ENCODE measurements at regions of chr17 and their contacts with region 1.

Region 1: DNA sequence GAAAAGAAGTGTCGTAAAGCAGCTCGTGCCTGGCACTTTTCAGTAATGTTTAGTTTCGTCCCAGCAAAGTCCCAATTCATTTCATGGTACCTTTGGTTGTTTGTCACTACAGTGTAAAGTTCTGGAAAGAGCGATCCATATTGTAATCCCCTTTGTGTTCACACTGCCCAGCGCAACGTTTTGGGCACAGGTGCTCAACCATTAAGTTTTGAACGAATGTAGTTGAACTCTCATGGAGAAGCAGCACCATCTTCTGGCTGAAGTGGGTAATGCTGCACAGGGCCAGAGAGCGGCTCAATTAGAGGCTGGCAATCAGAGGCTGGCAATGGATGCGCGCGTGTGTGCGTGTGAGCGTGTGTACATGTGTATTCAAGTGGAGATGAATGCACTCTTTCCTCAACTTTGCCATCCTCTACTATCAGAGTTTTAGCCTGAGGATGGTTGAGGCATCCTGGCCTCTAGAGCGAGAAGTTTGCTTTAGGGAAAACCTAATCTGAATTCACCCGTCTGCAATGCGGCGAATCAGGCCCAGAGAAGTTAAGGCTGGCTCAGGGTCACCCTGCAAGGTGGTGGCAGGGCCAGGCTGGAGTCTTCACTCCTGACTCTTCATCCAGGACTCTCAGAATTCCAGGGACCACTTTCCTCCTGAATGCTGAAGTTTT is 29.9 kb downstream of the DYNLL2 start:
- DNase-seq: peak; percentile 60 to 79 (median 70)
- ATAC-seq: peak; percentile 98
- H3K4me3 ChIP-seq: no peak overlapping the region
- H3K27ac ChIP-seq: no peak overlapping the region
- H3K4me1 ChIP-seq: no peaks in the 10 kb centered on the region
- H3K27me3 ChIP-seq: peaks cover 0 to 8% of the 10 kb centered on the region in 2 donors
- CTCF ChIP-seq: peak; percentile 90 to 95

Region 2: DNA sequence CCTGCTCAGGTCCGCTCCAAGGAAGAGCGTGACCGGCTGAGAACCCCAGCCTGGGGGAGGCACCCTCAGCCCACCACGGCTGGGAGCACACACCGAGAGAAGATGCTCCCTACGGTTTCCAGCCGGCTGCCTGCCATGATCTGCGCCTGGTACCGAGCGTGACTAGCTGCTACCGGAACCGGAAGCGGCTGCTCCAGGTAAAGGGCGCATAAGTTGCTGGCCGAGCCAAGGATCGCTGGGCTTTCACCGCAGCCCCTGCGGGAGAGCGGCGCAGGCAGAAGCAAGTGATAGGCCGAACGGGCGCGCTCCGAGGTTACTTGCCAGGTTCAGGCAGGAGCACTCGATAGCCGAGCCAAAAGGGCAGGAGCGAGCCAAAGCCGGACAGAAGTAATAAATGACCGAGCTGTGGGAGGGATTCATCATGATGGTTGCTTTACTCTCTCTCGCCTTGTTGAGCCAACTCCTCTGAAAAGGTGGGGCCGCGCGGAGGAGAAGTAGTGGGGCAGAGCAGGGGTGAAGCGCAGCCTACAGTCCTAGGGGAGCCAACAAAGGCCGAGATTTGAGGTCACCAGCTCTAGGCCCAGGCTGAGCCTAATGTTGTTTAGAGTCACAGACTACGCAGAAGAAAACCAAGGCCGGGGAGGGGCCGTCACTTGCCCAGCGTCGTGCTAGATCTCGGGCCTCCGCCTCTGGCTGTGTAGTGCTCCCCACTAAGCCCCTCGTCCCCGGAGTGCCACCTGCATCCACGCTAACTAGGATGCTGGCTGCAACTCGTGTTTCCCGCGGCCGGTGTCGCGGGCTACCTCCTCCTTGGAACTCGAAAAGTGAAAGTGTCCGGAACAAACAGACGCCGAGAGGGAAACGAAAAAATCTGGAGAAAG is 263.0 kb before region 1 on chr17 and contains the start of gene MRPS23:
- intact Hi-C with region 1: loop called in 1 of 2 experiments (anchors 10 kb)
- DNase-seq: peak; percentile 93 to 99 (median 98)
- ATAC-seq: peak; percentile 96
- H3K4me3 ChIP-seq: peak within 1 kb of the TSS; percentile 79 to 89
- H3K27ac ChIP-seq: peak within 1 kb of the TSS; percentile 85 to 91
- H3K4me1 ChIP-seq: peaks cover 21 to 43% of the 10 kb centered on the region in 2 donors
- H3K27me3 ChIP-seq: no peaks in the 10 kb centered on the region
- CTCF ChIP-seq: peak in 1 of 2 donors; percentile 33
- polyA plus RNA-seq, gene MRPS23: 39.7 to 46.1 (median 44.2) TPM

Region 3: GRCh38 chr17:58028578-58028977 is 84.5 kb before region 1 on chr17:
- intact Hi-C with region 1: no loop called
- DNase-seq: no peak
- ATAC-seq: no peak
- H3K4me3 ChIP-seq: no peak overlapping the region
- H3K27ac ChIP-seq: no peak overlapping the region
- H3K4me1 ChIP-seq: no peaks in the 10 kb centered on the region
- H3K27me3 ChIP-seq: no peaks in the 10 kb centered on the region
- CTCF ChIP-seq: no peak

Region 4: GRCh38 chr17:58382108-58382871 is 269.2 kb after region 1 on chr17:
- intact Hi-C with region 1: no loop called
- DNase-seq: no peak
- ATAC-seq: no peak
- H3K4me3 ChIP-seq: no peak overlapping the region
- H3K27ac ChIP-seq: no peak overlapping the region
- H3K4me1 ChIP-seq: peaks cover 16 to 22% of the 10 kb centered on the region in 2 donors
- H3K27me3 ChIP-seq: no peaks in the 10 kb centered on the region
- CTCF ChIP-seq: no peak